Left ventricle myocardium inferior (tissue), 1 donor: ENCODE measurements at regions of chr6 and their contacts with region 1.

Region 1: GRCh38 chr6:147972448-147972847 is 370.2 kb upstream of the SASH1 start:
- DNase-seq: no peak
- H3K4me3 ChIP-seq: no peak overlapping the region
- H3K27ac ChIP-seq: no peak overlapping the region
- H3K4me1 ChIP-seq: no peaks in the 10 kb centered on the region
- H3K27me3 ChIP-seq: no peaks in the 10 kb centered on the region
- CTCF ChIP-seq: no peak

Region 2: GRCh38 chr6:147900247-147900830 is 72.1 kb before region 1 on chr6:
- intact Hi-C with region 1: no loop called
- DNase-seq: no peak
- H3K4me3 ChIP-seq: no peak overlapping the region
- H3K27ac ChIP-seq: no peak overlapping the region
- H3K4me1 ChIP-seq: no peaks in the 10 kb centered on the region
- H3K27me3 ChIP-seq: no peaks in the 10 kb centered on the region
- CTCF ChIP-seq: no peak

Region 3: GRCh38 chr6:147930745-147931144 is 41.7 kb before region 1 on chr6:
- intact Hi-C with region 1: loop called (anchors 2 kb)
- DNase-seq: no peak
- H3K4me3 ChIP-seq: no peak overlapping the region
- H3K27ac ChIP-seq: no peak overlapping the region
- H3K4me1 ChIP-seq: no peaks in the 10 kb centered on the region
- H3K27me3 ChIP-seq: no peaks in the 10 kb centered on the region
- CTCF ChIP-seq: no peak

Region 4: GRCh38 chr6:148005806-148006205 is 33.4 kb after region 1 on chr6:
- intact Hi-C with region 1: no loop called
- DNase-seq: no peak
- H3K4me3 ChIP-seq: no peak overlapping the region
- H3K27ac ChIP-seq: no peak overlapping the region
- H3K4me1 ChIP-seq: no peaks in the 10 kb centered on the region
- H3K27me3 ChIP-seq: no peaks in the 10 kb centered on the region
- CTCF ChIP-seq: no peak